ENCODE measurements at regions of chr9 and their contacts with region 1.

Region 1: GRCh38 chr9:135023088-135023791 is 64.2 kb upstream of the OLFM1 start:
- DNase-seq: no peak
- ATAC-seq: no peak
- H3K4me3 ChIP-seq: no peak overlapping the region
- H3K27ac ChIP-seq: no peak overlapping the region
- H3K4me1 ChIP-seq: no peaks in the 10 kb centered on the region
- H3K27me3 ChIP-seq: no peaks in the 10 kb centered on the region; the same call in 1 of the 2 replicates
- CTCF ChIP-seq: no peak

Region 2: GRCh38 chr9:134607971-134608370 is 415.3 kb before region 1 on chr9:
- CTCF ChIA-PET with region 1: no interaction called
- POLR2A ChIA-PET with region 1: interaction called, 10 read pairs
- in situ Hi-C with region 1: no loop called
- intact Hi-C with region 1: no loop called
- DNase-seq: no peak
- ATAC-seq: no peak
- H3K4me3 ChIP-seq: no peak overlapping the region
- H3K27ac ChIP-seq: no peak overlapping the region
- H3K4me1 ChIP-seq: no peaks in the 10 kb centered on the region
- H3K27me3 ChIP-seq: no peaks in the 10 kb centered on the region
- CTCF ChIP-seq: no peak

Region 3: GRCh38 chr9:134781591-134782294 is 241.5 kb before region 1 on chr9:
- CTCF ChIA-PET with region 1: interaction called, 11 read pairs
- POLR2A ChIA-PET with region 1: no interaction called
- in situ Hi-C with region 1: no loop called
- intact Hi-C with region 1: no loop called
- DNase-seq: no peak
- ATAC-seq: no peak; the same call in 1 of the 2 replicates
- H3K4me3 ChIP-seq: no peak overlapping the region
- H3K27ac ChIP-seq: no peak overlapping the region
- H3K4me1 ChIP-seq: no peaks in the 10 kb centered on the region; the same call in 1 of the 2 replicates
- H3K27me3 ChIP-seq: no peaks in the 10 kb centered on the region; the same call in 1 of the 2 replicates
- CTCF ChIP-seq: no peak; the same call in 1 of the 2 replicates

Measured in Panc1 (cell line).